ENCODE measurements at regions of chr1 and their contacts with region 1.

Region 1: GRCh38 chr1:33633019-33633801 is 160.8 kb downstream of the ZSCAN20 start:
- DNase-seq: peak; percentile 86
- H3K4me3 Mint-ChIP-seq: no peak overlapping the region
- H3K27ac Mint-ChIP-seq: no peak overlapping the region
- H3K4me1 Mint-ChIP-seq: no peaks in the 10 kb centered on the region
- H3K27me3 Mint-ChIP-seq: peaks cover 26% of the 10 kb centered on the region

Region 2: GRCh38 chr1:33176362-33176850 is 456.8 kb before region 1 on chr1:
- CTCF ChIA-PET with region 1: no interaction called
- POLR2A ChIA-PET with region 1: no interaction called
- DNase-seq: no peak
- H3K4me3 Mint-ChIP-seq: no peak overlapping the region
- H3K27ac Mint-ChIP-seq: no peak overlapping the region
- H3K4me1 Mint-ChIP-seq: peaks cover 29% of the 10 kb centered on the region
- H3K27me3 Mint-ChIP-seq: no peaks in the 10 kb centered on the region

Region 3: GRCh38 chr1:33586111-33586510 is 47.1 kb before region 1 on chr1:
- CTCF ChIA-PET with region 1: no interaction called
- POLR2A ChIA-PET with region 1: no interaction called
- DNase-seq: no peak
- H3K4me3 Mint-ChIP-seq: no peak overlapping the region
- H3K27ac Mint-ChIP-seq: no peak overlapping the region
- H3K4me1 Mint-ChIP-seq: no peaks in the 10 kb centered on the region
- H3K27me3 Mint-ChIP-seq: peaks cover 5% of the 10 kb centered on the region

Region 4: GRCh38 chr1:33610864-33611455 is 22.2 kb before region 1 on chr1:
- CTCF ChIA-PET with region 1: interaction called, 23 read pairs
- POLR2A ChIA-PET with region 1: no interaction called
- DNase-seq: no peak
- H3K4me3 Mint-ChIP-seq: no peak overlapping the region
- H3K27ac Mint-ChIP-seq: no peak overlapping the region
- H3K4me1 Mint-ChIP-seq: no peaks in the 10 kb centered on the region
- H3K27me3 Mint-ChIP-seq: peaks cover 15% of the 10 kb centered on the region

Region 5: GRCh38 chr1:34162852-34163766 is 529.9 kb after region 1 on chr1:
- CTCF ChIA-PET with region 1: interaction called, 12 read pairs
- POLR2A ChIA-PET with region 1: no interaction called
- DNase-seq: peak; percentile 31
- H3K4me3 Mint-ChIP-seq: peak overlapping the region; percentile 48
- H3K27ac Mint-ChIP-seq: no peak overlapping the region
- H3K4me1 Mint-ChIP-seq: peaks cover 7% of the 10 kb centered on the region
- H3K27me3 Mint-ChIP-seq: peaks cover 54% of the 10 kb centered on the region

Region 6: DNA sequence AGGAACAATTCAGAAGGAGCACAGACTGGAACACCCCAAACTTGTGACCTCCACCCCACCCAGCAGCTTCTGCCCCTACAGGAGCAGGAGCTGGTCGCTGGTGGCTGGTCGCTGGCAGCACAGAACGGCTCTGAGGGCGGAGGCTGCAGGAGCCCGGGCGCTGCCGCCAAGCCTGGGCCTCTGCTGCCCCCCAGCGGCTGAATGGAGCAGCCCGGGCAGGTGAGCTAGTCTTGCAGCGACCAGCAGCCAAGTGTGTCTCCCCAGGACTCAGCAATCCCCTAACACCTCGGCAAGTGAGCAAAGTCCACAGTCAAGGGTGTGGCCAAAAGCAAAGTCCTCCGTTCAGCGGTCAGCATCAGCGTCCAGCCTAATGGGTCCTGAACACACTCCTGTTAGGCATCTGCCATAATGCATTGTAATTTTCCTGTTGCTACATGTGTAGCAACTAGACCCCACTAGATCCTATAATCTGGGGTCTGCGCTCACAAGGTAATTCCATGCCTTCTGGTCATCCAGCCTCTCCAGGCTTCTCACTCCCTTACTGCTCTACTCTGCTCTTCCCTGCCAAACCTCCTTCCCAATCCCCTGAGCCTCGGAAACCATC is 1109.6 kb after region 1 on chr1:
- CTCF ChIA-PET with region 1: interaction called, 21 read pairs
- POLR2A ChIA-PET with region 1: no interaction called
- DNase-seq: peak; percentile 79
- H3K4me3 Mint-ChIP-seq: no peak overlapping the region
- H3K27ac Mint-ChIP-seq: no peak overlapping the region
- H3K4me1 Mint-ChIP-seq: no peaks in the 10 kb centered on the region
- H3K27me3 Mint-ChIP-seq: peaks cover 7% of the 10 kb centered on the region